Mammary epithelial cell (primary cell): ENCODE measurements at regions of chr14 and their contacts with region 1.

Region 1: DNA sequence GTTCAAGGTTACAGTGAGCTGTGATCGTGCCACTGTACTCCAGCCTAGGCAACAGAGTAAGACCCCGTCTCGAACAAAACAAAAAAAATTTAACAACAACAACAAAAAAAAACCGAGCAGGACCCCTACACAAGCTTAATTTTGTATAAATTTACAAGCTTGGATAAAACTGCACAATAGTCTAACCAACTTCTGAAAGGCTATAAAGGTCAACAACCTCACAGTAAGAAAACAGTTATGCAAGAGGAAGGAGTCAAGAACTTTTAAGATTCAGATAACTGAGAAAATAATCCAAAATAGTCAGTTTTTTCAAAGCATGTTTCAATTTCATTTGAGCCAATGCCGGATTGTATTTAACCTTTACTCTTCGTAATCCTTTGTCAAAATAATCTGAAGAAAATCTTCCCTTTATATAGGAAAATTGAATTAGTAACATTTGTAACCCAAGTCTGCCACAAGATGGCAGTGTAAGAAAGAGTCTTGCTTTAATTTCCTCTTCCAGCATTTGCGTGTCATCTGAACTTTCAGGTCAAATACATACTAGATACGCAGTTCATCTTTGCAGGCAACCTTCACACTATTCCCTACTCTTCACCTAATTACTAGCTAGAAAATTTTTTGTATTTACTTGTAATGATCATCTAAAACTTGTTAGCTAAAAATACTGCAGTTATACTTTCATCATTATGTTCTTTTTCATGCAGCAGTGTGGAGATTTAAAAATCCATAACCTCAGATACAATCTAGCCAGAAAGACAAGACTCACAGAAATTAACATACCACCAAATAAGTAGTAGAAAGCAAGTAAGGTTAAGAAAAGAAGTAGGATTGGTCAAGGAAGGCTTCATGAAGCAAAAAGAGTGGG is 5.8 kb downstream of the CCNB1IP1 start:
- DNase-seq: peak; percentile 50
- H3K4me3 ChIP-seq: no peak overlapping the region
- H3K27ac ChIP-seq: no peak overlapping the region
- H3K4me1 ChIP-seq: peaks cover 12% of the 10 kb centered on the region
- H3K27me3 ChIP-seq: no peaks in the 10 kb centered on the region
- CTCF ChIP-seq: peak; percentile 51 to 60

Region 2: DNA sequence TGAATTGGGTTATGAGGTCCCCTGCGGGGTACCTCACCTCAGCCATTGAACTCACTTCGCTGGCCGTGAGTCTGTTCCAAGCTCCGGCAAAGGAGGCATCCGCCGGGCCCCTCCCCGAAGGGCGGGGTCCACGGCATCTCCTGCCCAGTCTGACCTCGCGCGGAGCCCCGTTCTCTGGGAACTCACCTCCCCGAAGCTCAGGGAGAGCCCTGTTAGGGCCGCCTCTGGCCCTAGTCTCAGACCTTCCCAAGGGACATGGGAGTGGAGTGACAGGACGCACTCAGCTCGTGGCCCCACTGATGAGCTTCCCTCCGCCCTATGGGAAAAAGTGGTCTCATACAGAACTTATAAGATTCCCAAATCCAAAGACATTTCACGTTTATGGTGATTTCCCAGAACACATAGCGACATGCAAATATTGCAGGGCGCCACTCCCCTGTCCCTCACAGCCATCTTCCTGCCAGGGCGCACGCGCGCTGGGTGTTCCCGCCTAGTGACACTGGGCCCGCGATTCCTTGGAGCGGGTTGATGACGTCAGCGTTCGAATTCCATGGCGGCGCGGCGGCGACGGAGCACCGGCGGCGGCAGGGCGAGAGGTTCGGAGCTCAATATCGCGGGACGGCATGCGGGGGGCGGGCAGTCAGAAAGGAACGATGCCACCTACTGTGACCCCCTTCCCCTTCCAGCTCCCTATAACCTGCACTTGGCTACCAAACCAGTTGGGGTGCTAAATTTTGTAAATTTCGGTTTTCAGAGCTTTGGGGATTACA is 16.0 kb after region 1 on chr14 and contains the start of gene PARP2:
- CTCF ChIA-PET with region 1: interaction called, 19 read pairs
- dilution Hi-C with region 1: no loop called
- in situ Hi-C with region 1: no loop called
- intact Hi-C with region 1: loop called (anchors 2 kb)
- DNase-seq: peak; percentile 100
- H3K4me3 ChIP-seq: peak within 1 kb of the TSS; percentile 85 to 97 (median 86)
- H3K27ac ChIP-seq: peak within 1 kb of the TSS; percentile 97
- H3K4me1 ChIP-seq: no peaks in the 10 kb centered on the region
- H3K27me3 ChIP-seq: no peaks in the 10 kb centered on the region
- CTCF ChIP-seq: no peak
- total RNA-seq, gene PARP2: 5.8 to 29.3 TPM

Region 3: GRCh38 chr14:20350860-20351259 is 23.6 kb after region 1 on chr14:
- CTCF ChIA-PET with region 1: no interaction called
- dilution Hi-C with region 1: no loop called
- in situ Hi-C with region 1: no loop called
- intact Hi-C with region 1: loop called (anchors 1 kb)
- DNase-seq: no peak
- H3K4me3 ChIP-seq: no peak overlapping the region
- H3K27ac ChIP-seq: no peak overlapping the region
- H3K4me1 ChIP-seq: no peaks in the 10 kb centered on the region
- H3K27me3 ChIP-seq: no peaks in the 10 kb centered on the region
- CTCF ChIP-seq: peak in 1 of 2 donors; percentile 29

Region 4: DNA sequence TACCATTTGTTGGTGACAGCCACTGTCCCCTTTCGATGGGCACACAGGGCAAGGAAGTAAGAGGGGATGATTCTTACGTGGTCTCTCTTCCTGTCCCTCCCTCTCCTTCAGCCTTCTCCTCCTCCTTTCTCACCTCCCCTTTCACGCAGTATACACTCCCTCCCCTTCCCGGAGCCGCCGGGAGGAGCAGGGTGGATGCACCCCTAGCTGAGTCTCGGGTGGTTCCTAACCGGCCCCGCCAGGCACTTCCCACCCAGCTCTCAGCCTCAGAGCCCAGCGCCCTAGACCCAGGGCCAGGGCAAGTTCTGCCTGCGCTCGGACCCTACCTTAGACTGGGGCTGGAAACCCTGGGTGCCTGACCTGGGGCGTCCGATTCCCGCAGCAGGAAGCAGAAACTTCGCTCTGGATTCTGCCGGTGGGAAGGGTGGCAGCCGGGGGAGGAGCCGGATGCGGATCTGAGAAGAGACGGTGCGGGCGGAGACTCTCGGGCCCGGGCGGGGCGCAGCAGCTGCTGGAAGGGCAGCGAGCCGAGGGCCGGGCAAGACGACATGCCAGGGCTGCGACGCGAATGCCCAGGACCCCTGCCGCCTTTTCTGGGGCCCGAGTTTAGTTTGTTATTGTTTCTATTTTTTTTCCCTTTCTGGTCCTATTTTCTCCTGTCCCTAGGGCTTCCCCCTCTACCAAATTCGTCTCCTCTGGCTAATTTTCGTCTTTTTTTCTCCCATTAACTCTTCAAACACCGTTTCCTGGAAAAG is 86.0 kb after region 1 on chr14 and contains the start of gene TEP1:
- CTCF ChIA-PET with region 1: no interaction called
- dilution Hi-C with region 1: loop called (anchors 5 kb)
- in situ Hi-C with region 1: no loop called
- intact Hi-C with region 1: no loop called
- DNase-seq: peak; percentile 87
- H3K4me3 ChIP-seq: peak within 1 kb of the TSS; percentile 92 to 98 (median 97)
- H3K27ac ChIP-seq: peak within 1 kb of the TSS; percentile 81
- H3K4me1 ChIP-seq: peaks cover 11% of the 10 kb centered on the region
- H3K27me3 ChIP-seq: no peaks in the 10 kb centered on the region
- CTCF ChIP-seq: no peak
- total RNA-seq, gene TEP1: 27.5 to 28.1 TPM

Region 5: DNA sequence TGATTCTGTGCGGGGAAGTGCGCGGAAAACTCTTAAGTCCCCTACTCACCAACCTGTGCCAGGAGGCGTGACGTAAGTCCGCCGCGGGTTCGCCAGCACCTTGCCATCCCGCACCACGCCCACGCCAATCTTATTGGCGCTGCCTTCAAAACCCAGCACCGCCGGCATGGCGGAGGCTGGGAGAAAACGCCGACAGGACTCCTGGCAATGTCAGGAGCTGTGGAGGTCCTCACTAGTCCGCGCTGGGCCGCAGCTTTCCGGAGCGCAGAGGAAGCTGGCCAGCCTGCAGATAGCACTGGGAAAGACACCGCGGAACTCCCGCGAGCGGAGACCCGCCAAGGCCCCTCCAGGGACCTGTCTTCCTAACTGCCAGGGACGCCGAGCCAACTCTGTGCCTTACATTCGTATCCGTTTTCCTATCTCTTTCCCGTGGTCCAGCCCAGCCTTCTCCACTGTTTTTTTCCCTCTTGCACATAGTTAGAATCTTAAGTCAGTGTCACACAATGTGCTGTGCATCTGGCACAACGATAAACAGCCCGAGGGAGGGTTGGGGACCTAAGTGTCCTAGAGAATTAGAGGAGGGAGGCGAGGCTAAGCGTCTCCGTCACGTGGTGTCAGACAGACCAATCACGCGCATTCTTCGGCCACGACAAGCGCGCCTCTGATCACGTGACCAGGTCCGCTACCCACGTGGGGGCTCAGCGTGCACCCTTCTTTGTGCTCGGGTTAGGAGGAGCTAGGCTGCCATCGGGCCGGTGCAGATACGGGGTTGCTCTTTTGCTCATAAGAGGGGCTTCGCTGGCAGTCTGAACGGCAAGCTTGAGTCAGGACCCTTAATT is 127.5 kb after region 1 on chr14 and contains the starts of genes APEX1 and OSGEP:
- CTCF ChIA-PET with region 1: no interaction called
- dilution Hi-C with region 1: no loop called
- in situ Hi-C with region 1: loop called in 1 of 2 experiments (anchors 25 kb)
- intact Hi-C with region 1: loop called (anchors 5 kb)
- DNase-seq: peak; percentile 98
- H3K4me3 ChIP-seq: peak within 1 kb of the TSS; percentile 94 to 97 (median 97)
- H3K27ac ChIP-seq: peak within 1 kb of the TSS; percentile 94
- H3K4me1 ChIP-seq: peaks cover 9% of the 10 kb centered on the region
- H3K27me3 ChIP-seq: no peaks in the 10 kb centered on the region
- CTCF ChIP-seq: no peak
- total RNA-seq, gene APEX1: 96.4 to 128 TPM
- total RNA-seq, gene OSGEP: 22.6 to 34.8 TPM